ENCODE measurements at regions of chr4 and their contacts with region 1.

Region 1: GRCh38 chr4:52545099-52546069 is 113.7 kb downstream of the USP46 start:
- DNase-seq: no peak
- H3K4me3 ChIP-seq: no peak overlapping the region
- CTCF ChIP-seq: peak; percentile 96

Region 2: DNA sequence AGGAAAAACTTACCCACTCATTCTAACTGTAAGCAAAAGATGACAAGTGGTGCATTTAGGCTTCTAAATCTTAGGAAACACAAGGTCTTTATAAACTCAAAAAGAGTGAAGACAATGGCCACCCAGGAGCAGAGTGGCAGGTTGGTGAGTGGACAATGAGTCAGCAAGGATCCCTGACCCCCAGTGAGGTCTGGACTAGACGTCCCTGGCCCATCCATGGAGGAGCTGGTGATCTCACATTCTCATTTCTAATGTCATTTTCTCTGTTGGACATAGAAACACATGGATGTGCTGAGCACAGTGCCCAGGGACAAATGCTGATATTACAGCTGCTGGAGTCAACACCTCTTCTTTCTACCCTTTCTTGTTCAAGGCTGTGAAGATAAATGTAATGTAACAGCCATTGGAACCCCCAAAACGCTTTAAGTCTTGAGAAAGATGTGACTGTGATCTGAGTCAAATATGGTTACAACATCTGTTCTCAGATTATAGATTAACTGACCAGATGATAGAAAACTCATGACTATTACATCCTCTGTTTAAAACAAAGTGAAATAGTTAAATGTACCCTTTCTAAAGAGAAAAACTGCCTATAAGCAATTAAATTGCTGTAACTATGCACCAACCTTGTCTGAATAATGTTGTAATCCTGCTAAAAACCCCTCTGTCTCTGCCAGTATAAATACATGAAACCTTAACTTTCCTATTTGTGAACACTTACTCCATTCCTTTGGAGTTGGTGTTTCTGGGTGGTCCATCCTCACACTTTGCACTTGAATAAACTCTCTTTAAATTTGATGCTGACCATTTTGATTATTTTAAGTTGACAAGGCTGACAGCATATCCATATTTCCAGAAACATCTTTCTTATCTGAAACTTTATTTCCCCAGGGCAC is 21.0 kb after region 1 on chr4:
- CTCF ChIA-PET with region 1: interaction called, 14 read pairs
- POLR2A ChIA-PET with region 1: no interaction called
- DNase-seq: no peak
- H3K4me3 ChIP-seq: no peak overlapping the region
- CTCF ChIP-seq: no peak

Region 3: DNA sequence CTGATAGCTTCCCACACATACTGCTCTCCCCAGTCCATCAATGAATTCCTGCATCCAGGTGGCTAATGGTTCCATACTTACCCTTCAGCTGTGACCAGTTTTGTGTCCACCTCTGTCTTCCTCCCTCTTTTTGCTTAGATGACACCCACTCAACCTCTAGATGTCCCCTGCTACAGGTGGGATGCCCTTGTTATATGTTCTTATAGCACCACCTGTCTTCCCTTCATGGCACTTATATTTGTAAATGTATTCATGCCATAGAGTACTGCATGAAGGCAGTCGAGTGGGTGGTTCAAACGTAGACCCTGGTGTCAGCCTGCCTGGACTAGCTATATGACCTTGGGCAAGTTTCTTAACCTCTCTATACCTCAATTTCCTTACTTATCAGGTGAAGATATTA is 120.2 kb after region 1 on chr4:
- CTCF ChIA-PET with region 1: interaction called, 21 read pairs
- POLR2A ChIA-PET with region 1: no interaction called
- DNase-seq: no peak
- H3K4me3 ChIP-seq: no peak overlapping the region
- CTCF ChIP-seq: no peak

Region 4: GRCh38 chr4:52721968-52722815 is 176.8 kb after region 1 on chr4:
- CTCF ChIA-PET with region 1: interaction called, 15 read pairs
- POLR2A ChIA-PET with region 1: no interaction called
- DNase-seq: peak; percentile 85
- H3K4me3 ChIP-seq: peak overlapping the region; percentile 88
- CTCF ChIP-seq: no peak

Region 5: GRCh38 chr4:52976523-52977230 is 431.3 kb after region 1 on chr4:
- CTCF ChIA-PET with region 1: interaction called, 334 read pairs
- POLR2A ChIA-PET with region 1: no interaction called
- DNase-seq: no peak
- H3K4me3 ChIP-seq: no peak overlapping the region
- CTCF ChIP-seq: no peak

Measured in AG04449 (cell line).